ENCODE measurements at regions of chr1 and their contacts with region 1.

Region 1: DNA sequence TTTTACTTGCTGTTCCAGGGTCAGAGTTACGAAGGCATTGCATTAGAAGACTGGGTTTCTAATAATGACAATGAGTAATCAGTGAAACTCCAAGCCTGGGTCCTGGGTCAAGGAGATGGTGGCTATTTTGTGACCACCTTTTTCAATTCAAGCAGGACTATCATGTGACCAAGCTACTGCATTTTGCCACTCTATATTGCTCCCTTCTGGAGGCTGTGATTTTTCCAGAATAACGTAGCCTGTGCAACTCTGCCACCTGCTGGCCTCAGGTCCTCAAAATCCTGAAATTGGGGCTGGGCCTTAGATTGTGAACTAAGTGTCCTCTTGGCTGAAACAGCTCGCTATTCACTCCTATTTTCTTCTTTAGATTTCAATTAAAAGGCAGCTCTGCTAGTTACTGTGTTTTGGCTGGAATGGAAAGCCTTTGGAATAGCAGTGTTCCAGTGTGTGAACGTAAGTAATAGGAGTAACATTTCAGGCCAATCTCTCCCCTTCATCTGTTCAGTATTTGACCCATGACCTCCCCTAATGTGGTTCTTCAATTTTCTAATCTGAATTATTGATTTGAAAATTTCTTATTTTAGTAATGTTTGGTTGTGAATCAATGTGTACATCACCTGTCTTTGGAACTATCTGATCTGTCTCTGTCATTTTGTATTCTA is 52.9 kb upstream of the CD46 start:
- DNase-seq: peak; percentile 66
- H3K4me3 Mint-ChIP-seq: no peak overlapping the region
- H3K27ac Mint-ChIP-seq: no peak overlapping the region
- H3K4me1 Mint-ChIP-seq: no peaks in the 10 kb centered on the region
- H3K27me3 Mint-ChIP-seq: peaks cover 13% of the 10 kb centered on the region

Region 2: GRCh38 chr1:207579436-207579799 is 119.5 kb before region 1 on chr1:
- CTCF ChIA-PET with region 1: interaction called, 24 read pairs
- POLR2A ChIA-PET with region 1: no interaction called
- intact Hi-C with region 1: no loop called
- DNase-seq: peak; percentile 57
- H3K4me3 Mint-ChIP-seq: no peak overlapping the region
- H3K27ac Mint-ChIP-seq: no peak overlapping the region
- H3K4me1 Mint-ChIP-seq: peaks cover 5% of the 10 kb centered on the region
- H3K27me3 Mint-ChIP-seq: peaks cover 2% of the 10 kb centered on the region

Region 3: DNA sequence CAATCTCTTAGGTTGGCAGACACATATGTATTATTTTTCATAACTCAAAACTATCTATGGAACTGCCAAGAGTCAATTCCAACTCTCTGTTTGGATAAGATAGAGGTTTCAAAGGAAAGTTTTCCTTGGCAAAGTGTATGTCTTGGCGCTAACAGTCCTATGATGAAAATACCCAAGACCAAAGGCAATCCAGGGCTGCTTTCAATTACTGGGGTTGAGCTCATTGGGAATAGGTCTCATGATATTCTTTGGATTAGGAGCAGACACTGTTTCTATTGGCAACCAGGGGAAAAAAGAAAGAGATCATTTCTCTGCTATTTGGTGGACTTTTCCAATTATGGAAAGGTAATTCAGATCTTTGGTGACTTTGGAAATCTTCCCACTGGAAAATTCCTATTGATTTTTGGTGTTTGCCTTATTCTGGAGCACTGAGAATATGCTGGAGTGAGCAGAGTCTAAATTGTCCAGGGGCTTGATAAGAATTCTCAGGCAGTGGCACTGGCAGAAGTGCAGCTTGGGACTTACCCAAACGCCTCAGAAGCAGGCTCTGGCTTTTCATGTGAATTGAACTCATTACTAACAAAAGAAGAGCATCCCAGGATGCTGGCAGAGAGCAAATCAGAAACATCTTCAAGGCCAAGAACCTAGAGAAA is 565.6 kb after region 1 on chr1:
- CTCF ChIA-PET with region 1: no interaction called
- POLR2A ChIA-PET with region 1: no interaction called
- intact Hi-C with region 1: no loop called
- DNase-seq: no peak
- H3K4me3 Mint-ChIP-seq: no peak overlapping the region
- H3K27ac Mint-ChIP-seq: no peak overlapping the region
- H3K4me1 Mint-ChIP-seq: no peaks in the 10 kb centered on the region
- H3K27me3 Mint-ChIP-seq: peaks cover 40% of the 10 kb centered on the region